ENCODE measurements at regions of chr20 and their contacts with region 1.

Region 1: GRCh38 chr20:48620519-48621254 is 207.1 kb downstream of the PREX1 start:
- DNase-seq: peak; percentile 85
- H3K4me3 ChIP-seq: peak overlapping the region; percentile 53
- H3K27ac ChIP-seq: no peak overlapping the region
- H3K4me1 ChIP-seq: peaks cover 23% of the 10 kb centered on the region
- H3K27me3 ChIP-seq: no peaks in the 10 kb centered on the region
- CTCF ChIP-seq: peak; percentile 79

Region 2: DNA sequence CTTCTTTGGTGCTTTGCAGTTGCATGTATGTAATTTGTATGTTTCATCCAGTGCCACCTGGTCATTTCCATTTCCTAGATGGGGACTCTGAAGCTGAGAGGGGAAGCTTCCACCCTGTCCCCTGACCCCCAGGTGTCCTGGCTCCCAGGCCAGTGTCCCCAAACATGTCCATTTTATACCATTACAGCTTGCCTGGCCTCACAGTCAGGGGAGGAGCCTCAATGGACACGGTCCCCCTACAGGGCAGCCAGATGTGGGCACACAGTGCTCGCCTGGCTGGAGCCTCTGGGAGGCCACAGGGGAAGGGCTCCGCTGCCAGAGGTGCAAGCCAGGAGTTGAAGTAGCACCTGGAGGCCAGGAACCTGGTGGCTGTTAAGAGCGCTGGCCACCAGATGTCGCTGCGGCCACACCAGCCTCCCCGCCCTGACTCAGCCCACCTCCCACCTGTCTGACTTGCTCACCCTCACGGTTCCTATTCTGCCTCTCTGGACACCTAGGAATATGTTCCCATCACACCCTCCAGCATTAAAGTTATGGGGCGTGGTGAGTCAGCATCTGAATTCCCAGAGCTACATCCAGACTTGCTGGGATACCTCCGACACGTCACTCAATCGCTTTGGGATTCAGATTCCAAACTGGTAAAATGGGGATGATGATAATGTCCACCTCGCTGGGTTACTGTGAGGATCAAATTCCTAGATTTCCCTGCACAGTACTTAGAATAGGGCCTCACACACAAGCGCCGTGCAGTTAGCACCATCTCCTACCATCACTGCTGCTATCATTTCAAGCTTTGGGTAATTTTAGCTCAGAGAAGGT is 942.8 kb before region 1 on chr20:
- intact Hi-C with region 1: loop called (anchors 5 kb)
- DNase-seq: peak; percentile 38
- H3K4me3 ChIP-seq: no peak overlapping the region
- H3K27ac ChIP-seq: no peak overlapping the region
- H3K4me1 ChIP-seq: peaks cover 31% of the 10 kb centered on the region
- H3K27me3 ChIP-seq: no peaks in the 10 kb centered on the region
- CTCF ChIP-seq: peak; percentile 81

Region 3: DNA sequence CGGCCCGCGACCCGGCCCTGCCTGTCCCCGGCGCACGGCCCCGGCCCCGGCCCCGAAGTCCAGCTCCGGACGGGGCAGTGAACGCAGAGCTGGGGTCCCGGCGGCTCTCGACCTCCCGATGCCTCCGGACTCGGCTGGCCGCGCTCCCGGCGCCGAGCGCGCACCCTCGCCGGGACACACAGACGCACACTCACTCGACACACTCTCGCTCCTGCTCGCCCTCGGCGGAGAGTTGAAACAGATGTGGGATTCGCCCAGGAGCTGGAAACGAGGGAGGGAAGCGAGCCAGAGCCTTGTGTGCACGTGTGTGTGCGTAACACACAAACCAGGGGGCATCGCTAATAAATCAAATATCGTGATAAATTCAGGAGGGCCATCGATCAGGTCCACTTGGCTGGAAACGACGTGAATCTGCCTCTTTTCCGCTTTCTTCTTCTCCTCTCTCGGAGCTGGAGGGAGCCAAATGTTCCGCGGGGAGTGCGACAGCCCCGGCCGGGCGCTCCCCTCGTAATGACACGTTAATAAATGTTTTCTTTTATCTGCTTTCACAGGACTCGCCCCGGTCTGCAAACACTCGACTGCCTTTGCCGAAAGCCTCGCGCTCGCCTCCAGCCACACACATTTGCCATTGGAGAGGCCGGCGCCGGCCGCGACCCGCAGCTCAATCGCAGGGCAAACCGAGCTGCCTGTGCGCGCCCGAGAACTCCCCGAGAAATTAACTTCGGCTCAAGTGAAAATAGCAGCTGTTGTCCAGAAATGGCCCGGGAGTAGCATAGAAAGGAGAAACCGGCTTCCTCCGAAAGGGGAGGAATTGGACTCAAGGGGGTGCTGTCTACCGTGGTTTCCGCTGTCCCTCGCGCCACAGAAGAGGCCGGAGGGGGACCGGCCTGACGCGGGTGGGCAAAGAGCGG is 834.6 kb before region 1 on chr20:
- intact Hi-C with region 1: loop called (anchors 10 kb)
- DNase-seq: peak; percentile 61
- H3K4me3 ChIP-seq: peak overlapping the region; percentile 69
- H3K27ac ChIP-seq: peak overlapping the region; percentile 84
- H3K4me1 ChIP-seq: peaks cover 48% of the 10 kb centered on the region
- H3K27me3 ChIP-seq: peaks cover 39% of the 10 kb centered on the region
- CTCF ChIP-seq: peak; percentile 80

Region 4: DNA sequence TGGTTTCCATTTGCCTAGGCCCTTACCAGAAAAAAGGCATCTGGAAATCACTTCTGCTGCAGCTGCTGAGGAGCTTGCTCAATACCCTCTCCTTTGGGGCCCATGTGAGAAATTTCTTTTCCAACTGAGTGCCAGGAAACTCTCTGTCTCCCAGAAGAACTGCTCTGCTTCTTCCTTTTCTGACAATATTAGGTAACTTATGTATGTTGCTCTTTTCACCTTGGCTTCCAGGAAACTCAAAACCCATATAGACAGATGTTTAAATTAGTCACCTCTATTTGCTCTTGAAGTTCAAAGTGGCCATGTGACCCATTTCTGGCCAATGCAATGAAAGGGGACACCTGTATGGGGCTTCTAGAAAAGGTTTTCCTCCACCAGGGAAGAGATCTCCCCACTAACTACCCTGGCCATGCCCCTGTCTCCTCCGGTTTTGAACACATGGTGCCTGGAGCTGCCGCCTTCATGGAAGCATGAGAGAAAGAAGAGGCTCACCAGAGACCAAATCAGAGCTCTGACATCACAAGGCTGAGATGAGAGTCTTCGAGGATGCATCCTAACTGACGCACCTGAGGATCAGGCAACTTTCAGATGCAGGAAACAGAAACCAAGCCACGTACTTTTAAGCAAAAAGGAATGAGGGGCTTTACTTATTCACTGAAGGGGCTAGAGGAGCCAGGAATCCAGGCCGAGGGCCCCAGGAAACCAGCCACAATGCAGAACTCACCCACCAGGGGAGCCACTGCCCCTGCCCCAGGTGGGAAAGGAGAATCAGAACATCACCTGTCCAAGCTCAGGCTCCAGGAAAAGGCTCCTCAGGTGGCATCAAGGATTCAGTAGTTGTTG is 85.7 kb after region 1 on chr20:
- intact Hi-C with region 1: no loop called
- DNase-seq: no peak
- H3K4me3 ChIP-seq: no peak overlapping the region
- H3K27ac ChIP-seq: peak overlapping the region; percentile 40
- H3K4me1 ChIP-seq: peaks cover 40% of the 10 kb centered on the region
- H3K27me3 ChIP-seq: no peaks in the 10 kb centered on the region
- CTCF ChIP-seq: no peak

Region 5: GRCh38 chr20:48733296-48733887 is 112.7 kb after region 1 on chr20:
- intact Hi-C with region 1: no loop called
- DNase-seq: no peak
- H3K4me3 ChIP-seq: no peak overlapping the region
- H3K27ac ChIP-seq: no peak overlapping the region
- H3K4me1 ChIP-seq: peaks cover 52% of the 10 kb centered on the region
- H3K27me3 ChIP-seq: no peaks in the 10 kb centered on the region
- CTCF ChIP-seq: no peak

Region 6: GRCh38 chr20:49230561-49231193 is 610.0 kb after region 1 on chr20:
- intact Hi-C with region 1: no loop called
- DNase-seq: peak; percentile 36
- H3K4me3 ChIP-seq: no peak overlapping the region
- H3K27ac ChIP-seq: no peak overlapping the region
- H3K4me1 ChIP-seq: no peaks in the 10 kb centered on the region
- H3K27me3 ChIP-seq: no peaks in the 10 kb centered on the region
- CTCF ChIP-seq: no peak

Measured in left ventricle myocardium inferior (tissue), 1 donor.